ENCODE measurements at regions of chr5 and their contacts with region 1.

Region 1: GRCh38 chr5:188488-189481 is 2.5 kb upstream of the LRRC14B start:
- DNase-seq: peak; percentile 98
- H3K4me3 ChIP-seq: no peak overlapping the region
- H3K27ac ChIP-seq: no peak overlapping the region
- H3K4me1 ChIP-seq: peaks cover 0 to 19% of the 10 kb centered on the region in 2 experiments; a peak in 1 of 4 replicates
- H3K27me3 ChIP-seq: no peaks in the 10 kb centered on the region
- CTCF ChIP-seq: peak; percentile 84
- EP300 ChIP-seq: no peak
- RAD21 ChIP-seq: peak; percentile 73

Region 2: GRCh38 chr5:56574-57290 is 132.1 kb before region 1 on chr5:
- CTCF ChIA-PET with region 1: no interaction called
- POLR2A ChIA-PET with region 1: no interaction called
- DNase-seq: no peak
- H3K4me3 ChIP-seq: no peak overlapping the region
- H3K27ac ChIP-seq: no peak overlapping the region
- H3K4me1 ChIP-seq: no peaks in the 10 kb centered on the region; a peak in 1 of 4 replicates
- H3K27me3 ChIP-seq: peaks cover 30% of the 10 kb centered on the region
- CTCF ChIP-seq: no peak
- EP300 ChIP-seq: no peak
- RAD21 ChIP-seq: no peak

Region 3: GRCh38 chr5:140443-140829 is 48.3 kb before region 1 on chr5:
- CTCF ChIA-PET with region 1: no interaction called
- POLR2A ChIA-PET with region 1: no interaction called
- DNase-seq: no peak
- H3K4me3 ChIP-seq: no peak overlapping the region
- H3K27ac ChIP-seq: no peak overlapping the region
- H3K4me1 ChIP-seq: no peaks in the 10 kb centered on the region
- H3K27me3 ChIP-seq: no peaks in the 10 kb centered on the region
- CTCF ChIP-seq: no peak
- EP300 ChIP-seq: no peak
- RAD21 ChIP-seq: no peak

Region 4: DNA sequence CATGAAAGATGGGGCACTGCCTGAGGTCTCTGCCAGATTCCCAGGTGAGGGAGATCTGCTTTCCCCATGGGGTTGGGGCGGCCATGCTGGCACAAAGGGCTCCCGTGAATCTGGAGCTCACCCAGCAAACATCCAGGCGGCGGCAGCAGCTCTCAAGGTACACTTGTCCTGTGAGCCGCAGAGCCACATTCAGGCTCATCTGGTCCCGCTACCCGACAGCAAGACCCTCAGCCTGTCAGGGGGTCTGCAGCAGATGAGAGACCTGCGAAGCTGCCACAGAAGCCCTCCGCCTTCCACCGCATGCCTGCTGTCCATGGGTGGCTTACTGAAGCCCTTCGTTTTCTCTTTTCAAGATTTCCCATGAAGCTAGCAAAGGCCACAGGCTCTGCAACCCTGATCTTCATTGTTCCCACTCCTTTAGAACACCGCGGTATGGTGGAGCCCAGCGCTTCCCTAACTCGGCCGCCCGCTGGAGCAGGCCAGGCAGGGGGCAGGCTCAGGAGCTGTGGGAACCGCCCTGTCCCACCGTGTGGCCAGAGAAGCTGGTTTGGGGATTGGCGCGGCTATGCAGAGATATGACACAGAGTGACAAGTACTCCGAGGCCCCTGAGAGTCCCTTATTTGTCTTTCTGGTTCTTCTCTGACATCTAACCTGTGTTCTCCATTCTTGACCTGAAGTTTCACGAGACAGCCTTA is 11.3 kb after region 1 on chr5:
- CTCF ChIA-PET with region 1: interaction called, 10 read pairs
- POLR2A ChIA-PET with region 1: no interaction called
- DNase-seq: no peak
- H3K4me3 ChIP-seq: no peak overlapping the region
- H3K27ac ChIP-seq: no peak overlapping the region
- H3K4me1 ChIP-seq: no peaks in the 10 kb centered on the region
- H3K27me3 ChIP-seq: no peaks in the 10 kb centered on the region
- CTCF ChIP-seq: no peak
- EP300 ChIP-seq: no peak
- RAD21 ChIP-seq: no peak

Region 5: DNA sequence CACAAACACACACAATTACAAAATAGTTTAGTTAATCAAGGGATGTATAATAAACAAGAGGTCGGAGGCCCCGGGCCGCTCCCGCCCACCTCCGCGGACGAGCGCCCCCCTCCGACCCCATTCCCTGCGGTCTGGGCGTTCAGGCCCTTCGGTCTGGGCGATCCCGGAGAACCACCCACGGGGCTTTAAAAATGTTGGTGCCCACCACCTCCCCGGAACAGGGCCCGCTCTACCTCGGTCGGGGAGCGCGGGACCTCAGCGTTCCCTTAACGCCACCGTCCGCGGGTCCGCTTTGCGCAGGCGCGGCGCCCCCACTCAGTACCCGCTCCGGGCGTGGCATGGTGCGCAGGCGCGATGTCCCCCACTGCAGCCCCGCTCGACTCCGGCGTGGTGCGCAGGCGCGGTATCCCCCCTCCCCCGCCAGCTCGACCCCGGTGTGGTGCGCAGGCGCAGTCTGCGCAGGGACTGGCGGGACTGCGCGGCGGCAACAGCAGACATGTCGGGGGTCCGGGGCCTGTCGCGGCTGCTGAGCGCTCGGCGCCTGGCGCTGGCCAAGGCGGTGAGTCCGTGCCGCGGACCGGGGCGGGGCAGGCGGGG is 29.2 kb after region 1 on chr5 and contains the starts of genes CCDC127 and SDHA:
- CTCF ChIA-PET with region 1: interaction called, 11 read pairs
- POLR2A ChIA-PET with region 1: no interaction called
- DNase-seq: peak; percentile 100
- H3K4me3 ChIP-seq: peak within 1 kb of the TSS; percentile 60 to 91
- H3K27ac ChIP-seq: peak within 1 kb of the TSS; percentile 50 to 83; a peak in 3 of 4 replicates
- H3K4me1 ChIP-seq: peaks cover 6 to 16% of the 10 kb centered on the region in 2 experiments
- H3K27me3 ChIP-seq: no peaks in the 10 kb centered on the region
- CTCF ChIP-seq: peak; percentile 72
- EP300 ChIP-seq: no peak
- RAD21 ChIP-seq: no peak
- polyA plus RNA-seq, gene CCDC127: 3.7 and 3.9 TPM in 2 replicates
- polyA plus RNA-seq, gene SDHA: 95.7 and 106 TPM in 2 replicates

Measured in SK-N-SH (cell line).